Stomach (tissue), 19 donors: ENCODE measurements at regions of chr15 and their contacts with region 1.

Region 1: DNA sequence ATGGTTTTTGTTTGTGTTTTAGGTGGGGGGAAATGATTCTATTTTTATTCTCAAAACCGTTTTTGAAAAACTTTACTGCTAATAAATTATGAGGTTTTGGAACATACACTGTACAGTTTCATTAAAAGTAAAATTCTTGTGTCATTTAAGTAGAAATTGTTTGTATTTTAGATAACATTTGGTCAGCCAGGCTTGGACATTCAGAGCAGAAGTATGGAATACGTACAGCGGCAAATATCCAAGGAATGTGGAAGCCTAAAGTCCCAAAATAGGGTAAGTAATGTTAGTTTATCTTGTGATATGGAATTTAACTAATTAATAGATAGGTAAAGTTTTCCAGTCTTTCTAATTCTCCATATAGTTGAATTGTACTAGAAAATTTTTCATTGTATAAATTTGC is 96.6 kb downstream of the SPRED1 start:
- DNase-seq: peak in 1 of 2 donors; percentile 13
- H3K4me3 ChIP-seq: no peak overlapping the region
- H3K27ac ChIP-seq: no peak overlapping the region
- H3K4me1 ChIP-seq: peaks cover 0 to 13% (median 0%) of the 10 kb centered on the region in 4 donors
- H3K27me3 ChIP-seq: no peaks in the 10 kb centered on the region
- CTCF ChIP-seq: no peak
- EP300 ChIP-seq: no peak
- POLR2A ChIP-seq: no peak

Region 2: DNA sequence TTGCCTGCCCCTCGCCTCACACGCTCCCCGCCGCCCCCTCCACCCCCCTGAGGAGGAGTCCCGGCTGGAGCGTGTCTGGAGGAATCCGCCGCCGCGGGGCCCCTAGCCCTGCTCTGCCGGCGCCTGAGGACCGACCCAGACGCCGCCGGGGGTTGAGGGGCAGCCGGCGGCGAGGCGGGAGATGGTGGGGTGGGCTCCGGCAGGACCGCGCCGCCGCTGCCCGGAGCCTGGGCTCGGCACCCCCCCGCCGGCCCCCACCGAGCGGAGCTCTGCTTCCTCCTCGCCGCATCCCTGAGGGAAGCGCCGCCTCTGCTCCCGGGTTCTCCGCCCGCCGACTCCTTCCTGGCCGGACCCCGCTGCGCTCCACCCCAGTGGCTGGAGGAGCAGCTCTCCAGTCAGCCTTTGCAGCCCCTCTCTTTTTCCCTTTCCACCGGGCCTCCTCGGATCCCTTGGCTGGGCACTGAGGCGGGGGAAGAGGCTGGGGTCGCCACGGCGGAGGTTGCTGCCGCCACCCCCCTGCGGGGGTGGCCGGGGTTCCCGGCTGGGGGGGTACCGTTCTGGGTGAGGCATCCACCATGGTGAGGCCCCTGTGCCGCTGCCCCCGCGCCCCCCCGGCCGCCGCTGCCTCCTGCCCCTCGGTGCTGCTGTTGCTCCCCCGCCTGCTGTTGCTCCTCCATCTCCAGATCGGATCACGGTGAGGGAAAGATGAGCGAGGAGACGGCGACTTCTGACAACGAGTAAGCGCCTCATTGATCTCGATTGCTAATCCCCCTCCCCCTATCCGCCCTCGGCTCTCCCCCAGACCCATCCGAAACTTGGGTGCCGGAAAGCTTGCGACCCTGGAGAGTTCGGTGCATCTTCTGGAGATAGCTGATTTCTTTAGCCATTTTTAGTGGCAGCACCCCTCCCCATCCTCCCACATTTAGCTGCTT is 96.5 kb before region 1 on chr15 and contains the start of gene SPRED1:
- intact Hi-C with region 1: loop called (anchors 10 kb)
- DNase-seq: peak; percentile 63 to 91
- H3K4me3 ChIP-seq: peak within 1 kb of the TSS; percentile 59 to 94 (median 91)
- H3K27ac ChIP-seq: peak within 1 kb of the TSS; percentile 96 to 100 (median 99)
- H3K4me1 ChIP-seq: peaks cover 15 to 49% (median 37%) of the 10 kb centered on the region in 4 donors
- H3K27me3 ChIP-seq: peaks cover 0 to 10% (median 0%) of the 10 kb centered on the region in 3 donors
- CTCF ChIP-seq: no peak
- EP300 ChIP-seq: no peak
- POLR2A ChIP-seq: no peak
- total RNA-seq, gene SPRED1: 2.2 to 112 (median 15.4) TPM